IMR-90 (cell line): ENCODE measurements at regions of chr2 and their contacts with region 1.

Region 1: DNA sequence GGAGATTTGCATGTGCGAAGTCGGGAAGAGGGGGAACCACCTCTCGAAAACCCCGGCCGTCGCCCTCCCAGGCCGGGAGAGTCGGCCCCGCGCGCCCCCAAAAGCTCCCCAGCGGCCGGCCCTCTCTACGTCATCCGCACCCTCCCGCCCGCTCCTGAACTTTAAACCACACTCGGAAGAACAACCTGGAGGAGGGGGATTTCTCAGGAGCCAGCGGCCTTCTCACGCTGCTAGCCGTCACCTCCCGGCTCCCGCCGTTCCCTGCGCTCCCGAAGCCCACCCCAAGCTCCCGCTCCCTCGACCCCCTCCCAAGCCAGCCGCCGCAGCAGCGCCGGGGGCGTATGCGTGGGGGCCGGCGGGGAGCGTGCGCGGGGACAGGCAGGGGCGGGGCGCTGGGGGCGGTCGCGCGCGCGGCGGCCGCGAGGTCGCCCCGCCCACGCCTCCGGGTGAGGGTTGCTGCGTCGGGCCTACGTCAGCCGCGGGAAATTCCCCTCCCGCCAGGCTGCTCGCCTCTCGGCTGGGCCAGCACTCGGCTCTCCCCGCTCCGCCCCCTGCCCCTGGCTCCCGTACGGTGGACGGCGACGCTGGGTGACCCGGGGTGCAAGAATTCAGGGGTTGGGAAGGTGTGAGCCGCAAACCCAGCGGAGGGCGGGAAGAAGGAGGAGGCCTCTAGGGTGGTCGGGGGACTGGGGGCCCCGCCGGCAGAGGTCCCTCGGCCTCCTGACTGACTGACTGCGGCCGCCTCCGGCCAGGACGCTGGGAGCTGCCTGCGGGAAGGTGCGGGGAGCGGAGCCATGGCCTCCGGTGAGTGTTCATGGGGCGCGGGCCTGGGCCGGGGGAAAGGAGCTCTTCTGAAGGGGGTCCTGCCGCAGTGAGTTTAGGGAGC is at the start of gene REL:
- DNase-seq: peak; percentile 92
- ATAC-seq: peak; percentile 96
- H3K4me3 ChIP-seq: peak within 1 kb of the TSS; percentile 65
- H3K27ac ChIP-seq: peak within 1 kb of the TSS; percentile 94
- H3K4me1 ChIP-seq: no peaks in the 10 kb centered on the region; the same call in 1 of the 2 replicates
- H3K27me3 ChIP-seq: no peaks in the 10 kb centered on the region
- CTCF ChIP-seq: no peak
- POLR2A ChIP-seq: peak; percentile 94
- RAD21 ChIP-seq: 0 out of 2 replicates have a peak, but pooled peaks have one; percentile 1
- total RNA-seq, gene REL: 4.3 and 5.3 TPM in 2 replicates

Region 2: DNA sequence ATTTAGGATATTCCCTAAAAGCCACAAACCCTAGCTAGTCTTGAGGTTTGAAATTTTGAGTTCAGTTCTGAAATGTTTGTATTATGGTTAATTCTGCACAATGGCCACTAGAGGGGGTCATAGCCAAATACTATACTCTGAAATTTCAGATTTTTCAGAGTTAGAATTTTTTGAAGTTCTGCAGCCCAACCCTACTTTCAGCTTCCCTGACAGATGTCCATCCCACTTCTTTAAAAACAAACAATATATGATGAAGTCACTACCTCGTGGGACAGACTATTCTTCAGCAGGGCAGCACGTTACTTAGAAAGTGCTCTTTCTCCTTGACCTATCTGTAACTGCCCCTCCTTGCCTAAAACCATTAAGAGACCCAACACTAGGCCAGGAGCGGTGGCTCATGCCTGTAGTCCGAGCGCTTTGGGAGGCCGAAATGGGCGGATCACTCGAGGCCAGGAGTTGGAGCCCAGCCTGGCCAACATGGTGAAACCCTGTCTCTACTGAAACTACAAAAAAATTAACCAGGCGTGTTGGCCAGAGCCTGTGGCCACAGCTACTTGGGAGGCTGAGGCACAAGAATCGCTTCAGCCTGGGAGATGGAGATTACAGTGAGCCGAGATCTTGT is 173.4 kb before region 1 on chr2:
- CTCF ChIA-PET with region 1: no interaction called
- POLR2A ChIA-PET with region 1: no interaction called
- dilution Hi-C with region 1: no loop called
- in situ Hi-C with region 1: no loop called
- intact Hi-C with region 1: loop called (anchors 10 kb)
- DNase-seq: peak; percentile 28
- ATAC-seq: peak; percentile 82
- H3K4me3 ChIP-seq: no peak overlapping the region
- H3K27ac ChIP-seq: no peak overlapping the region
- H3K4me1 ChIP-seq: no peaks in the 10 kb centered on the region; the same call in 1 of the 2 replicates
- H3K27me3 ChIP-seq: no peaks in the 10 kb centered on the region; the same call in 1 of the 2 replicates
- CTCF ChIP-seq: peak; percentile 67
- POLR2A ChIP-seq: no peak
- RAD21 ChIP-seq: peak; percentile 56

Region 3: GRCh38 chr2:60794277-60794863 is 86.9 kb before region 1 on chr2:
- CTCF ChIA-PET with region 1: no interaction called
- POLR2A ChIA-PET with region 1: no interaction called
- dilution Hi-C with region 1: no loop called
- in situ Hi-C with region 1: no loop called
- intact Hi-C with region 1: loop called (anchors 1 kb)
- DNase-seq: peak; percentile 27
- ATAC-seq: no peak; the same call in 1 of the 2 replicates
- H3K4me3 ChIP-seq: no peak overlapping the region
- H3K27ac ChIP-seq: no peak overlapping the region
- H3K4me1 ChIP-seq: no peaks in the 10 kb centered on the region
- H3K27me3 ChIP-seq: no peaks in the 10 kb centered on the region
- CTCF ChIP-seq: peak; percentile 54
- POLR2A ChIP-seq: no peak
- RAD21 ChIP-seq: peak; percentile 63

Region 4: DNA sequence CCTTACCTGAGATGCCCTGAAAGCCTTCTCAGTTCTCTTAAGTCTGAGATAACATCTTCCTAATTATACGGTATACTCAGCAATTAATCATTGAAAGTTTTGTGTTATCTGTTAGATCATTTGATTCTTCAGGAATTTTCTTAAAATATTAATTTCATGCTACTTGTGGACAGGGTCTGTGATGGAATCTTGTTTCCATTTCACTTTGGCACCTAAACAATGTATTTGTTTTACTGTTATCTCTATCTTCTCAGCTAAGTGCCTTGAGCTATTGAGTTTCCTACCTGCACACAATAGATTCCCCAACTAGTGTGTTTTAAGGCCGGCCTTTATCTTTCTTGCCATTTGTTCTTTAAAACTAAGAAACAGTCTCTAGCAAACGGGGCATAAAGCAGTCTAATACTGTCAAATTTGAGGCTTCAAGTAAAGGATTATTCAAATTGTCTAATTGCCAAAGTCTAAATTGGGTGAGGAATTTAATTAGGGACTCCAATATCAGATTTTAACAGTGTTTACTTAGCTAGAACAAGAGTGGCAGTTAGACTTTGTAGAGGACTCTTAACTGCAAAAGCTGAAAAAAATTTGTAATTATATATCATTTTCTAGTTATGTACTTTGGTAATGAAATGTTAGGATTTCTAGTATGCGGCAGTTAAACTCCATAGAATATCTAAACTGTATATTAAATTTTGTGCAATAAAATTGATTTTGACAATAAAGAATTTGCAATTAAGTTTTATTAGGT is 26.9 kb after region 1 on chr2:
- CTCF ChIA-PET with region 1: no interaction called
- POLR2A ChIA-PET with region 1: no interaction called
- dilution Hi-C with region 1: no loop called
- in situ Hi-C with region 1: no loop called
- intact Hi-C with region 1: no loop called
- DNase-seq: no peak
- ATAC-seq: no peak
- H3K4me3 ChIP-seq: no peak overlapping the region
- H3K27ac ChIP-seq: no peak overlapping the region
- H3K4me1 ChIP-seq: no peaks in the 10 kb centered on the region
- H3K27me3 ChIP-seq: no peaks in the 10 kb centered on the region
- CTCF ChIP-seq: no peak
- POLR2A ChIP-seq: no peak
- RAD21 ChIP-seq: no peak

Region 5: DNA sequence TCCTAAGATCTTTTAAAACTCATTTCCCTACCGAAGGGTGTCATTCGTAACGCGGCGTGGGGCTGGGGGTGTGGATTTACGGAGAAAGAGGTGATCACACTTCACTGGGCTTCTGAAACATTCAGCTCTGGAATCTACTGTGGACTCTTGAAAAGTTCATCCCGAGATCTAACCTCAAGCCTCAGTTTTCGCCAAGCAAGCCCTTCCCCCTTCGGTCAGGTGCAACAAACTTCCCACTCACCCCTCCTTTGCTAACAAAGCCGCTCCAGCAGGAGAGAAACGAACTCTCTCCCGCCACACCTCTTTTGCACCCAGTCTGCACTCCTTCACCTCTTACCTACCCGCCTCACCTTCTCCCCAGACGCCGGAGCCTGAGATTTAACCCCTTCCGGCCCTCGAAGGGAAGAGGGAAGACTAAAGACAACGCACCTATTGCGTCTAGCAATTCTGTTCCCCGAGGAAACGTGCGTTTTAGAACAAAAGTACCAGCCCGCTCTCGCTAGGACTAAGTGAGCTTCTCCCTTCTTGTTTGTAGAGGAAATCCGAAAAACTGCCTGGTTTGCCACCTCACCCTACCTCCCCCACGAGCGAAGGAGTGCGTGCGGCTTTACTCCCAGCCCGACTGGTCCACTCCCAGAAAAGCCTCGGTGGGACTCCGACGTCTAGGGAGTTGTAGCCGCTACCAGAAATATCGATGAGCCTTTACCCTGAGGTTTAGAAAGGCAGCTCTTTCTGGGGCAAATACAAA is 135.7 kb after region 1 on chr2:
- CTCF ChIA-PET with region 1: no interaction called
- POLR2A ChIA-PET with region 1: no interaction called
- dilution Hi-C with region 1: no loop called
- in situ Hi-C with region 1: no loop called
- intact Hi-C with region 1: loop called (anchors 2 kb)
- DNase-seq: peak; percentile 71
- ATAC-seq: peak; percentile 89
- H3K4me3 ChIP-seq: peak overlapping the region; percentile 66
- H3K27ac ChIP-seq: peak overlapping the region; percentile 83
- H3K4me1 ChIP-seq: no peaks in the 10 kb centered on the region; the same call in 1 of the 2 replicates
- H3K27me3 ChIP-seq: no peaks in the 10 kb centered on the region
- CTCF ChIP-seq: no peak
- POLR2A ChIP-seq: no peak; the same call in 1 of the 2 replicates
- RAD21 ChIP-seq: no peak